H1 (cell line): ENCODE measurements at regions of chr16 and their contacts with region 1.

Region 1: DNA sequence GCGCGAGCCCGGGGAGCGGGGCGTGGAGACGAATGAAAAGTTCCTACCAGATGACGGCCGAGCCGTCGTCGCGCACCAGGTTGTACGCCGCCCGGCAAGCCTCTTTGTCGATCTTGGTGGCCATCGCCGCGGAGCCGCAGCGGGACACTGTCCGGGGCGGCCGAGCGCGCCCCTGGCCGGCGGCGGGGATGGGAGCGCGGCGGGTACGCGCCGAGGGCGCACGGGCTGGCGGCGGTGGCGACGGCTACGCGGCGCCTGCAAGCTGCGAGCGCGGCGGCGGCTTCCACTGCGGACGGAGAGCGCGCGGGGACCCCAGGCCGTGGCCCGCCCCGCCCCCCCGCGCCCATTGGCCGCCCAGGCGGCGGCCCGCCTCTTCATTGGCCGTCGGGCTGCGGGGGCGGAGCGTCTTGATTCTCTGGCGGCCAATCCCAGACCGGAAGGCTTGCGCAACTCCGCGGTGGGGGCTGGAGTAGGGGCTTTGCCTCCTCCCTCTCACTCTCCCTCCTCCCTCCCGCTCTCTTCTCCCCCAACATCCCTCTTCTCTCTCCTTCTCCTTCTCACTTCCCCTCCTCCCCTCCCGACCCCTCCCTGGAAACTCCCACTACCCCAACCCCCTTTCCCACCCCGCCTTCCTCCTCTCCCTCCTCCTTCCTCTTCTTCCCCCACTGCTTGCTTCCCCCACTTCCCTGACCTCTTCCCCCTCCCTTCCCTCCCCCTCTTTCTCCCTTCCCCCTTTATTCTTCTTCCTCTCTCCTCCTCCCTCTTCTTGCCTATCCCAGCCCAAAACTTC is at the start of gene COTL1:
- DNase-seq: peak; percentile 79 to 90
- H3K4me3 ChIP-seq: peak within 1 kb of the TSS; percentile 73 to 88 (median 78)
- H3K27ac ChIP-seq: peak within 1 kb of the TSS; percentile 56; the same call in 1 of the 2 replicates
- H3K4me1 ChIP-seq: peaks cover 6 to 21% (median 13%) of the 10 kb centered on the region in 4 experiments
- H3K27me3 ChIP-seq: peaks cover 0 to 5% (median 3%) of the 10 kb centered on the region in 4 experiments; a peak in 2 of 7 replicates
- CTCF ChIP-seq: no peak
- EP300 ChIP-seq: no peak
- POLR2A ChIP-seq: no peak; a peak in 1 of 3 replicates
- RAD21 ChIP-seq: no peak
- total RNA-seq, gene COTL1: 183 TPM in 2 replicates

Region 2: GRCh38 chr16:84511180-84511824 is 106.7 kb before region 1 on chr16:
- CTCF ChIA-PET with region 1: interaction called, 49 read pairs
- POLR2A ChIA-PET with region 1: interaction called, 3 read pairs
- DNase-seq: peak; percentile 64 to 89
- H3K4me3 ChIP-seq: peak overlapping the region in 2 of 4 experiments; percentile 26 to 36; a peak in 2 of 8 replicates
- H3K27ac ChIP-seq: no peak overlapping the region
- H3K4me1 ChIP-seq: peaks cover 3 to 16% (median 11%) of the 10 kb centered on the region in 4 experiments; a peak in 6 of 7 replicates
- H3K27me3 ChIP-seq: no peaks in the 10 kb centered on the region; a peak in 1 of 7 replicates
- CTCF ChIP-seq: peak; percentile 71 to 93 (median 87)
- EP300 ChIP-seq: no peak
- POLR2A ChIP-seq: no peak
- RAD21 ChIP-seq: peak; percentile 85 to 87

Region 3: GRCh38 chr16:84607694-84608093 is 10.3 kb before region 1 on chr16:
- CTCF ChIA-PET with region 1: interaction called, 13 read pairs
- POLR2A ChIA-PET with region 1: interaction called, 11 read pairs
- DNase-seq: no peak
- H3K4me3 ChIP-seq: no peak overlapping the region
- H3K27ac ChIP-seq: no peak overlapping the region
- H3K4me1 ChIP-seq: peaks cover 0 to 19% (median 16%) of the 10 kb centered on the region in 4 experiments; a peak in 6 of 7 replicates
- H3K27me3 ChIP-seq: no peaks in the 10 kb centered on the region
- CTCF ChIP-seq: no peak
- EP300 ChIP-seq: no peak
- POLR2A ChIP-seq: no peak
- RAD21 ChIP-seq: no peak

Region 4: DNA sequence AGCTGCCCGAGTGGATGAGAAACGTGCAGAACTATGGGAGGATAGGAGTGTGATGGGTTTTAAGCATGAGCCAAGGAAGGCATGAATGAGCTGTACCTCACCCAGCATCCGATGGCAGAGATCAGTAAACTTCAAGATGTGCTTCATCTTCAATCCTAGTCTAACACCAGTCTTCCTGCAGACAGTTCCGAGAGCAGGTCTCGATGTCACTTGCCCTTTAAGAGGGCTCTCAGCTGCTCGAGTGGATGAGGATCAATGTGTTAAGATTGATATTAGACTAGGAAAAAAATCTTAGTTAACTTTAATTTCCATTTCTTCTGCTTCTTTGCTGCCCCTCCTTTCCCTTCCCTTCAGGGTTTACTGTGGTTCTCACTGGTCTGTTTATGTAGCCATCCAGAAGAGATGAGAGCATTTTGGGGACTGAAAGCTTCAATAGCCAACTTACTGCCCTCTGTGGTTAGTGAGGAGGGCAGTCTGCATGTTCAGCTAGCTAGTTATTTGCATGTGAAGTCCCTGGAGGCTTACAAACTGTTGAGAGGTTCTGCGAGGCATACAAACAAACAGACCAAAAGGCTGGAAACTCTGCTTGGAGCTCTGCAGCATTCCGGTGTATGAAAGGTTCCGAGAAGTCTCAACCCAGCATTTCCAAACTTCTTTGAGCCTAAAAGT is 45.6 kb after region 1 on chr16:
- CTCF ChIA-PET with region 1: interaction called, 29 read pairs
- POLR2A ChIA-PET with region 1: no interaction called
- DNase-seq: no peak
- H3K4me3 ChIP-seq: no peak overlapping the region
- H3K27ac ChIP-seq: no peak overlapping the region
- H3K4me1 ChIP-seq: peaks cover 1 to 9% (median 6%) of the 10 kb centered on the region in 4 experiments; a peak in 4 of 7 replicates
- H3K27me3 ChIP-seq: no peaks in the 10 kb centered on the region
- CTCF ChIP-seq: no peak
- EP300 ChIP-seq: no peak
- POLR2A ChIP-seq: no peak
- RAD21 ChIP-seq: no peak

Region 5: DNA sequence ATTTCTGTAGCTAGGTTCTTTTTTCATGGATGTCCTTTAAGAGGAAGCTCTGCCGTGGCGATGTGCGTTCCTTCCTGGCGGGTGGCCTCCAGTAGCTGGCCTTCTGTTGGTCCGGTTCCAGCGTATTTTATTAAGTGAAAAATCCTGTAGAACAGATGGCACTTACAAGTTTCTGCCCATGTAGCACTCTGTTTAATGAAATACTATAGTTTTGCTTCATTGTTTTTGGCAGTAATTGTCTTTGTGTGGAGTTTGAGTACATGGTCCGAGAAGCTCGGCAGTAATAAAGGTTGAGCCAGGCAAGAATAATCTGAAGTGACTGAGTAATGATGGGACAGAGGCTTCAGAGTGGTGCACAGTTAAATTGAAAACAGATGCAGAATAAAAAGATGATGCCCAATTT is 102.2 kb after region 1 on chr16:
- CTCF ChIA-PET with region 1: interaction called, 30 read pairs
- POLR2A ChIA-PET with region 1: interaction called, 3 read pairs
- DNase-seq: peak in 1 of 2 experiments; percentile 22
- H3K4me3 ChIP-seq: no peak overlapping the region
- H3K27ac ChIP-seq: no peak overlapping the region
- H3K4me1 ChIP-seq: peaks cover 0 to 10% (median 4%) of the 10 kb centered on the region in 4 experiments; a peak in 6 of 7 replicates
- H3K27me3 ChIP-seq: no peaks in the 10 kb centered on the region
- CTCF ChIP-seq: no peak
- EP300 ChIP-seq: no peak
- POLR2A ChIP-seq: no peak
- RAD21 ChIP-seq: no peak

Region 6: DNA sequence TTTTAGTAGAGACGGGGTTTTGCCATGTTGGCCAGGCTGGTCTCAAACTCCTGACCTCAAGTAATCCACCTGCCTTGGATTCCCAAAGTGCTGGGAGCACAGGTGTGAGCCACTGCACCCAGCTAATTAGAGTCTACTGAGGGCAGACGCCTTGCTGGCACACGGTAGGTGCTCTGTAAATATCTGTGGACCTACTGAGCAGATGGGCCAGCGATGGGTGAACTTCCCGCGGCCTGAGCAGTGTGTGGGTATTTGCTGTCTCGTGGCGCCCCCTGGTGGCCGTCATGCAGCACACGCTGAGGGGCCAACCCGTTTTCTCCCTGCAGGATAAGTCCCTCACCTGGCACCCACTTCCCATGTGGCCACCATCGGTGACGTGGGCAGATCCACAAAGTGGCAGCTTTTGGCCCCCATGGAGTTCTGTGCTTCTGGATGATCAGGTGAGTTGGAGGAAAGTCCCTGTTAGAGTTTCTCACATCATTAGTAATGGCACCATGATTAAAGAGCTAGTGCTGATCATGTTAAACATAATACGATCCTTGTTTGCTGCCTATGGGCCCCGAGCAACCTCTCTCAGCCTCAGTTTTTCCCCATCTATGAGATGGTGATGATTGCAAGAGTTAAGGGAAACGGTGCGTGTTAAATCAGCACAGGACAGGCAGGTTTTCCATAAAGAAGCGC is 352.6 kb after region 1 on chr16:
- CTCF ChIA-PET with region 1: interaction called, 12 read pairs
- POLR2A ChIA-PET with region 1: no interaction called
- DNase-seq: peak; percentile 67 to 91
- H3K4me3 ChIP-seq: no peak overlapping the region
- H3K27ac ChIP-seq: no peak overlapping the region
- H3K4me1 ChIP-seq: no peaks in the 10 kb centered on the region
- H3K27me3 ChIP-seq: no peaks in the 10 kb centered on the region; a peak in 1 of 7 replicates
- CTCF ChIP-seq: peak; percentile 86 to 96 (median 95)
- EP300 ChIP-seq: no peak
- POLR2A ChIP-seq: no peak
- RAD21 ChIP-seq: peak; percentile 96 to 97